ENCODE measurements at regions of chr7 and their contacts with region 1.

Region 1: GRCh38 chr7:118259115-118259514 is 34.6 kb downstream of the ANKRD7 start:
- DNase-seq: peak in 1 of 9 donors; percentile 1
- ATAC-seq: no peak
- H3K4me3 ChIP-seq: no peak overlapping the region
- H3K4me3 Mint-ChIP-seq: no peak overlapping the region
- H3K27ac ChIP-seq: no peak overlapping the region
- H3K27ac Mint-ChIP-seq: no peak overlapping the region
- H3K4me1 ChIP-seq: no peaks in the 10 kb centered on the region
- H3K4me1 Mint-ChIP-seq: no peaks in the 10 kb centered on the region
- H3K27me3 ChIP-seq: no peaks in the 10 kb centered on the region
- H3K27me3 Mint-ChIP-seq: peaks cover 4 to 22% (median 15%) of the 10 kb centered on the region in 5 donors

Region 2: DNA sequence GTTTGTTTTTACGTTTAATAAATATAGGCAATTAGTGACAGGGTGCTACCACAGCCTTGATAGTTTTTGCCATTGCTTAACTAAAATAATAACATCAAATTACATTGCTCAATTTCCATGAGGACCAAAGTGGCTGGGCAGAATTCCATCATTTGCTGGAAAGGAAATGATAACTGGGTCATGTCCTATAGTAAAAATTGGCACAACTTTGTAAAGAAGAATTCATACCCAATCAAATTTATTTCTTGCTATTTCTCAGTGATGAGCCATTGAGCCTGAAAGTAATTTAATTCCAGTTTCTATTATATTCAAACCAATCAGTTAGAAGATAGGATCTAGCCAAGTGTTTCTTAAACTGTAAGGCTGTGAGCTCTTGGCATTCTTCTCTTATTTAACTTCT is 283.6 kb before region 1 on chr7:
- CTCF ChIA-PET with region 1: no interaction called
- POLR2A ChIA-PET with region 1: no interaction called
- intact Hi-C with region 1: no loop called
- DNase-seq: no peak
- ATAC-seq: no peak
- H3K4me3 ChIP-seq: no peak overlapping the region
- H3K4me3 Mint-ChIP-seq: no peak overlapping the region
- H3K27ac ChIP-seq: no peak overlapping the region
- H3K27ac Mint-ChIP-seq: no peak overlapping the region
- H3K4me1 ChIP-seq: no peaks in the 10 kb centered on the region
- H3K4me1 Mint-ChIP-seq: no peaks in the 10 kb centered on the region
- H3K27me3 ChIP-seq: no peaks in the 10 kb centered on the region
- H3K27me3 Mint-ChIP-seq: peaks cover 0 to 8% (median 0%) of the 10 kb centered on the region in 5 donors

Region 3: GRCh38 chr7:118022546-118022945 is 236.6 kb before region 1 on chr7:
- CTCF ChIA-PET with region 1: no interaction called
- POLR2A ChIA-PET with region 1: no interaction called
- intact Hi-C with region 1: no loop called
- DNase-seq: no peak
- ATAC-seq: no peak
- H3K4me3 ChIP-seq: no peak overlapping the region
- H3K4me3 Mint-ChIP-seq: no peak overlapping the region
- H3K27ac ChIP-seq: no peak overlapping the region
- H3K27ac Mint-ChIP-seq: no peak overlapping the region
- H3K4me1 ChIP-seq: no peaks in the 10 kb centered on the region
- H3K4me1 Mint-ChIP-seq: no peaks in the 10 kb centered on the region
- H3K27me3 ChIP-seq: no peaks in the 10 kb centered on the region
- H3K27me3 Mint-ChIP-seq: no peaks in the 10 kb centered on the region

Region 4: DNA sequence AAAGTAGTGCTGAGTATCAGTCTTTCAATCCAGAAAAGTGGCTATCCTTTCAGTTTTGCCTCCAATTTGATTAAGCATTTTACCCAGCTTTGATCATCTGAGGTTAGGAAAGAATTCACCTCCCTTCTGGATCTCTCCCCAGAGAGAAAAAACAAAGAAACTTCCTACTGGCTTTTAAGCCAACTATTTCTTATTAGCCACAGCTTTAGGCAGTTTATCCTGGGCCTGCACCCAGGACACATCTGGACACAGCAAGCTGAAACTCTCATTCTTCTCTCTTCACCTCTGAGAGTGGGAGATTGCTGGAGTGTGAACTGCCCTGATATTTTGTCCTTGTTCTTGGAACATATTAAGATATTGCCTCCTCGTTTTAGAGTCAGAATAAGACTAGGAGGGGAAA is 118.6 kb before region 1 on chr7:
- CTCF ChIA-PET with region 1: no interaction called
- POLR2A ChIA-PET with region 1: no interaction called
- intact Hi-C with region 1: no loop called
- DNase-seq: no peak
- ATAC-seq: no peak
- H3K4me3 ChIP-seq: no peak overlapping the region
- H3K4me3 Mint-ChIP-seq: no peak overlapping the region
- H3K27ac ChIP-seq: no peak overlapping the region
- H3K27ac Mint-ChIP-seq: no peak overlapping the region
- H3K4me1 ChIP-seq: no peaks in the 10 kb centered on the region
- H3K4me1 Mint-ChIP-seq: no peaks in the 10 kb centered on the region
- H3K27me3 ChIP-seq: no peaks in the 10 kb centered on the region
- H3K27me3 Mint-ChIP-seq: peaks cover 0 to 11% (median 6%) of the 10 kb centered on the region in 5 donors

Region 5: GRCh38 chr7:119197877-119198527 is 938.9 kb after region 1 on chr7:
- CTCF ChIA-PET with region 1: no interaction called
- POLR2A ChIA-PET with region 1: no interaction called
- intact Hi-C with region 1: loop called in 1 of 2 experiments (anchors 1 kb)
- DNase-seq: peak in 1 of 9 donors; percentile 2
- ATAC-seq: no peak
- H3K4me3 ChIP-seq: no peak overlapping the region
- H3K4me3 Mint-ChIP-seq: no peak overlapping the region
- H3K27ac ChIP-seq: no peak overlapping the region
- H3K27ac Mint-ChIP-seq: no peak overlapping the region
- H3K4me1 ChIP-seq: no peaks in the 10 kb centered on the region
- H3K4me1 Mint-ChIP-seq: no peaks in the 10 kb centered on the region
- H3K27me3 ChIP-seq: no peaks in the 10 kb centered on the region
- H3K27me3 Mint-ChIP-seq: peaks cover 0 to 3% (median 0%) of the 10 kb centered on the region in 5 donors